ENCODE measurements at regions of chr14 and their contacts with region 1.

Region 1: DNA sequence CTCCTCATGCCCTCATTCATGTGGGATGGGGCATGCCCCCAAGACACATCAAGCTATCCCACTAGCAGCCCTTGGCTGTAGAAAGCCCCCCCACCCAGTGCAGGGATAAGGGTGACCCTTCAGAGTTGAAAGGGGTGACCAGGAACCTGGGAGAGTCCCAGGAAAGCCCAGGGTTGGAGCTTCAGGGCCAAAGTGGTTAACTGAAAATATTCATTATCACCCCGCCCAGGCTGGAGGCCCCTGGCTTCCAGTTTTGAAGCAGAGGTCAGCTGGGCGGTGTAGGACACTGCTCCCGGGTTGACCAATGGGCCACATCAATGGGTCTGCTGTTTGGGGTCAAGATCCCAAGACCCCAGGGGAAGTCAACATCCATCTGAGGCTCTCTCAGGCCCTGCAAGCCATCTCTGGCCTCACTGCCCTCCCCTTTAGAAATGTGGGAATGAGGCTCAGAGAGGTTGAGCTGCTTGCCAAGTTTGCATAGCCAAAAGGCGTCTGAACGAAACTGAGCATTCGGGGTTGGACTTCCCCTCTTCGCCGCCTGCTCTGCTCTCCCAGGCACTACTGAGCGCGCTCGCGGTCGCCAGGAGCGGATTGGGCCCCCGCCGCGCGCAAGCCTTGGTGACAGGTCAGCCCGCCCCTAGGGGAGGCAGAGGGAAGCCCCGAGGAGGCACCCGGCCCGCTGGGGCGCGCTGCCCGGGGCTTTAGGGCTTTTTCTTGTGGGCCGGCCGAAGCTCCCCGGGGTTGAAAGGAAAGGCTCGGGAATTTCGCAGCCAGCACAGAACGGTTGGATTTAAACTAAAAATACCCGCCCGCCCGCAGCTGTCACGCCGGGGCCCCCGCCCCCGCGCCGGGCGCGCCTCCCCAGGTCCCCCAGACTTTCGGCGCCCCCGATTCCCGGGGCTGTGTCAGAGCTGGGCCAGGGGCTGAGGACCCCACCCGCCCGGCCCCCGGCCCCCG is 576 bp downstream of the SYNE3 start:
- DNase-seq: peak; percentile 96
- CTCF ChIP-seq: peak; percentile 40

Region 2: DNA sequence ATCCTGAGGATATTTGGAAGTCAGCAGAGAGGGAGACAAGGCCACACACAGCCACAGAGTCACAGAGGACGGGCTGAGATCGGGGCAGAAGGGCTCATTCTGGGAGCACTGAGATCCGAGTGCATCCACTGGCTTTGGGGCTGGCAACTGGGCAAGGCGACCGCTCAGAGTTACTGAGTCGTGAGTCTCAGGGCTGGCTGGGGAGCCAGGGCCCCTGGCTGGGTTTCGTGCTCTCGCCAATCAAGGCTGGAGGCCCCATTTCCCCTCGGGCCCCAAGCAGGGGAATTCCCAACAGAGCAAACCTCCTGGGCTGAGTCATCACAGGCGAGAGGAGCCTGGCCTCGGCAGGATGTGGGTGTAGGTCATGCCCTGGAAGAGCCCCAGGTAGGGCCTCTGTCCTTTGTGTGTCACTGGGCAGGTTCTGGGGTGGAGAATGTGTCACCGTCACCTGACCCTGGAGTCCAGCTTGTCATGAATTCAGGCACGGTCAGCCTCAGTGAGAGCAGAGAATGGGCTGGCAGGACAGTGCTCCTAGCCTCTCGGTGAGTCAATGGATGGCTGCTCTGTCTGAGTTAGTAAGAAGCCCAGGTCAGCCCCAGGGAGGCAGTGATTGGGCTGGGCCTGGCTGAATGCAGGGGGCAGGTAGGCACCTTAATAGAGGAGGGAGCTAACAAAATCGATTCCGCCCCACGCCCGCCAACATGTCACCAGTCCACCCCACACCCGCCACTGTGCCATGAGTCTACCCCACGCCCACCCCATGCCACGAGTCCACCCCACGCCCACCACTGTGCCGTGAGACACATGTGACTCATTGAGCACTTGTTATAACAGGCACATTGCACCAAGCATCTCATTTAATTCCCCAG is 1556.4 kb before region 1 on chr14:
- in situ Hi-C with region 1: loop called (anchors 25 kb)
- DNase-seq: peak; percentile 88
- CTCF ChIP-seq: no peak

Region 3: DNA sequence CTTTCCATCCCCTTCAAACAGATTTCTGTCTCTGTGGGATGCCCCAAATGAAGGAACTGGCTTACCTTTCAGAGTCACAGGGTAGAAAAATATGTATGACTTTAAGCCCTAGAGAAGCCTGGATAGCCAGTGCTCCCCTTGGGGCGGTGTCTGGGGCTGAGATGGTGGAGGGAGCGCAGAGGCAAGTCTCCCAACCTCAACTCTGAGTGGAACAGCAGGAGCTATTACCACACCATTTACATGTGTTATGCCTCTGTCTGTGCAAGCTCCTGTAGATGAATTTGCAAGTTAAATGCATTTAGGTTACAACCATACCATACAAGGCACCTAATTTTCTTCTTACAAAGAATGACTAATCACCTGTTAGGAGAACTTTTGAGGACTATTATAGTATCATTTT is 145.8 kb before region 1 on chr14:
- in situ Hi-C with region 1: no loop called
- DNase-seq: no peak
- CTCF ChIP-seq: no peak

Measured in GM13977 (cell line).